Psoas muscle (tissue), 8 donors: ENCODE measurements at regions of chr16 and their contacts with region 1.

Region 1: GRCh38 chr16:67053767-67054334 is 24.9 kb downstream of the CBFB start:
- DNase-seq: no peak
- ATAC-seq: no peak
- H3K4me3 ChIP-seq: no peak overlapping the region
- H3K27ac ChIP-seq: peak overlapping the region; percentile 87
- H3K4me1 ChIP-seq: peaks cover 22% of the 10 kb centered on the region
- H3K27me3 ChIP-seq: no peaks in the 10 kb centered on the region
- CTCF ChIP-seq: no peak

Region 2: GRCh38 chr16:66070140-66070917 is 983.5 kb before region 1 on chr16:
- intact Hi-C with region 1: no loop called
- DNase-seq: peak; percentile 32 to 74
- ATAC-seq: peak; percentile 64 to 94 (median 90)
- H3K4me3 ChIP-seq: no peak overlapping the region
- H3K27ac ChIP-seq: peak overlapping the region; percentile 54
- H3K4me1 ChIP-seq: peaks cover 15% of the 10 kb centered on the region
- H3K27me3 ChIP-seq: no peaks in the 10 kb centered on the region
- CTCF ChIP-seq: no peak

Region 3: DNA sequence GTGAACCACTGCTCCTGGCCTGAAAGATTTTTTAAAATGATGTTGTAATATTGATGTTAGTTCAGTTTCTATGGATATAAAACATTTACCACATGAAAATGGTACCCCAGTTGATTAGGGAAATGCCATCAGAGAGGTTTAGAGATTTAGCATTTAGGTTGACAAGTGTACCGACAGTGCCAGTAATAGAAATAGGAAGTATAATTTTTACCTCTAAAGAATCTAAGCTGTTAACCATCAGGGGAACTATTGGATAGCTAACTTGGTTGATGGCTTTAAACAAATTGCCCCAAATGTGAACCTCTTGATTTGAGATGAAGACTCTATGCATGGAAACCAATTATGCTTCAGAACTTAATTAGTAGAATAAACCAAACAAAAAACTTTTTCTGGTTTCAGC is 18.5 kb before region 1 on chr16:
- intact Hi-C with region 1: loop called in 1 of 2 experiments (anchors 1 kb)
- DNase-seq: no peak
- ATAC-seq: no peak
- H3K4me3 ChIP-seq: no peak overlapping the region
- H3K27ac ChIP-seq: no peak overlapping the region
- H3K4me1 ChIP-seq: peaks cover 48% of the 10 kb centered on the region
- H3K27me3 ChIP-seq: no peaks in the 10 kb centered on the region
- CTCF ChIP-seq: no peak

Region 4: GRCh38 chr16:67129422-67129821 is 75.6 kb after region 1 on chr16:
- intact Hi-C with region 1: no loop called
- DNase-seq: no peak
- ATAC-seq: peak in 2 of 4 donors; percentile 16 to 22
- H3K4me3 ChIP-seq: no peak overlapping the region
- H3K27ac ChIP-seq: peak overlapping the region; percentile 53
- H3K4me1 ChIP-seq: peaks cover 36% of the 10 kb centered on the region
- H3K27me3 ChIP-seq: no peaks in the 10 kb centered on the region
- CTCF ChIP-seq: no peak

Region 5: DNA sequence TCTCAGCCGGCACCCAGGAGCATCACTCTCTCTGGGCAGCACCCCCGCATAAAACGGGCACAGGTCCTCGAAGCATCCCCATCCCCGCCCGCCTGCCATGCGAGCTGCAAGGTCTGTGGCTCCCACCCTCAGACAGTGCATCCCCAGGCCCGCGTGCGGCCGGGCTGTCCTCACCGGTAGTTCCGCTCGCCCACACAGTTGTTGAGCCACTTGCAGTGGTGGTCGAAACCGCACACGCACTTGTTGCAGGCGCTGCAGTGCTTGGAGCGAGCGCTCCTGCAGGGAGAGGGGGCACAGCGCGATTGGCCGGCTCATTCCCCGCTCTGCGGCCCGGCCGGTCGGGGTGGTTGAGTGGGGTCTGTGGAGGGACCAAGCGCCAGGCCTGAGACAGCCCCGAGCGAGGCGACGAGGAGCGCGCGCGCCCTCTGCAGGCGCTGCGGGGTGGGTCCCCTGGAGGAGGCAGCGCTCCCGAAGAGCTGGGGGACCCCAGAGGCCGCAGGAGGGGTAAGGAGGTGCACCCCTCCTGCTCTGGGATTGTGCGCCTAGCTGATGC is 345.4 kb after region 1 on chr16:
- intact Hi-C with region 1: no loop called
- DNase-seq: peak; percentile 42 to 77
- ATAC-seq: peak; percentile 17 to 59 (median 26)
- H3K4me3 ChIP-seq: no peak overlapping the region
- H3K27ac ChIP-seq: no peak overlapping the region
- H3K4me1 ChIP-seq: peaks cover 27% of the 10 kb centered on the region
- H3K27me3 ChIP-seq: peaks cover 0 to under 1% (median 0%) of the 10 kb centered on the region in 3 donors
- CTCF ChIP-seq: peak; percentile 46